ENCODE measurements at regions of chr10 and their contacts with region 1.

Region 1: DNA sequence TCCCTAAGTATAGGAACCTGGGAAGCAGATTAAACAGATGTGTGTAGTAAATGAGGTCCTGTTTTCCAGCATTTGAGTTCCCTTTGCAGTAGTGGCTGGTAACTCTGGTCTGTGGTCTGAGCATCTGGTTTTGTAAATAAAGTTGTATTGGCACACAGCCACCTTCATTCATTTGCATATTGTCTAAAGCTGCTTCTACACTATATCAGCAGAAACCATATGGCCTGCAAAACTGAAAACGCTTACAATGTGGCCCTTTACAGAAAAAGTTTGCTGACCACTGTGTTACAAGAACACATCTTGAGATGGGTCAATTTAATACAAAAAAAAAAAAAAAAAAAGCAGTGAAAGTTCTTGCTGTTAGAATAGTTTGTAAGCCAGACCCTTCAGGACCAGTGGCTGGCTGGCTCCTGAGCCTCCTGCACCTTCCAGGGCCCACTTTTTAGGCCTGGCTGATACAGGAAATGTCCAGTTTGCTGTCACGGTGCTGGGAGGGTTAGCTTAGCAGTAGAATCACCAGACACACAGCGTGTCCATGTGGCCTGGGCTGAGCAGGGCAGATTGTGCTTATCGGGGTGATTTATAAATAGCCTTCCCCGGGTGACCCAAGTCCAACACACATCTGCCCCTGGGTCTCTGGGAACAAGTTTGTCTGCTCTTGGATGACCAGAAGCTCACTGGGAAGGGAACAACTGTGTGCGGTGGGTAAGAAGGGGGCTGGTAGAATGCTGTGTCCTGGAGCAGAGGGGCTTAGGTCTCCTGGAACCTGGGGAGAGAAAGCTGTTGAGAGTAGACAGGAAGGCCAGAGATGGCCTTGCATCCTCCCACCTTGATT is 1.4 kb downstream of the C10orf71 start:
- DNase-seq: peak; percentile 54 to 81
- ATAC-seq: peak; percentile 70 to 86 (median 79)
- H3K4me3 ChIP-seq: peak overlapping the region; percentile 8 to 64 (median 46)
- H3K27ac ChIP-seq: peak overlapping the region; percentile 81 to 98 (median 94)
- H3K4me1 ChIP-seq: peaks cover 0 to 98% (median 48%) of the 10 kb centered on the region in 9 donors
- H3K27me3 ChIP-seq: no peaks in the 10 kb centered on the region
- CTCF ChIP-seq: peak in 5 of 9 donors; percentile 6 to 46 (median 42)

Region 2: GRCh38 chr10:49187950-49188761 is 112.2 kb before region 1 on chr10 and contains the start of gene TMEM273:
- intact Hi-C with region 1: loop called in 3 of 10 experiments (anchors 10 kb)
- DNase-seq: peak; percentile 81 to 88
- ATAC-seq: peak; percentile 97 to 98 (median 98)
- H3K4me3 ChIP-seq: peak within 1 kb of the TSS in 9 of 10 donors; percentile 27 to 58 (median 49)
- H3K27ac ChIP-seq: peak within 1 kb of the TSS; percentile 17 to 88 (median 80)
- H3K4me1 ChIP-seq: peaks cover 7 to 81% (median 64%) of the 10 kb centered on the region in 9 donors
- H3K27me3 ChIP-seq: no peaks in the 10 kb centered on the region
- CTCF ChIP-seq: peak in 3 of 9 donors; percentile 20 to 30 (median 24)
- total RNA-seq, gene TMEM273: 10.9 to 27.3 (median 18.6) TPM

Region 3: DNA sequence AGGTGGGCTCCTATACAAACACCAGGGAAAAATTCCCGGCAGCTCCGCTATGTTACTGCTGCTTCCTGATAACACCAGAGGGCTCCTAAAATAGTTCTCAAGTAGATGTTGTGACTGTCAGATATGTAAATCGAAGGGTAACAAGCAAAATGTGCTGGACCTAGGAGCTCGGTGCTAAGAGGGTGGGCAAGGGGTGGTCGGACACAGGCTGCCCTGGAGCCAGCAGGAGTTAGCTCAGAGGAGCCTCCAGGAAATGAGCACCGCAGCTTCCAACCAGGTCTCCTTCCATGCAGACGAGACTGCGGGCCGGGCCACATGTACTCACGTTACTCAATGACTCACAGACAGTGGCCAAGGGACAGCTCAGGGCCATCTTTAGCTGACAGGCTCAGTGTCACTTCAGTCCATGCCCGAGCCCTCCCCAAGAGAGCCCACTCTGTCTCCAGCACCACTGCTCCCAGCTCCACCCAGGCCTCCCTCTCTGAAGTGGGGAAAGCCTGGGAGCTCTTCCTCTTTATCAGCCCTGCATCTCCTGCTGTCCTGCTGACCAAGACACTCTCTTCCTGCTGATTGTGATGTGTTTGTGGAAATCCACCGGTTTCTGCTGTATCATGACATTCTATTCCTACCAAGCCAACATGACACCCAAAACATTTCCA is 75.0 kb before region 1 on chr10:
- intact Hi-C with region 1: loop called in 3 of 10 experiments (anchors 5 to 10 kb)
- DNase-seq: peak in 1 of 2 donors; percentile 31
- ATAC-seq: peak; percentile 55 to 88 (median 74)
- H3K4me3 ChIP-seq: no peak overlapping the region
- H3K27ac ChIP-seq: peak overlapping the region in 5 of 10 donors; percentile 24 to 53 (median 38)
- H3K4me1 ChIP-seq: peaks cover 0 to 26% (median 10%) of the 10 kb centered on the region in 9 donors
- H3K27me3 ChIP-seq: no peaks in the 10 kb centered on the region
- CTCF ChIP-seq: no peak

Region 4: DNA sequence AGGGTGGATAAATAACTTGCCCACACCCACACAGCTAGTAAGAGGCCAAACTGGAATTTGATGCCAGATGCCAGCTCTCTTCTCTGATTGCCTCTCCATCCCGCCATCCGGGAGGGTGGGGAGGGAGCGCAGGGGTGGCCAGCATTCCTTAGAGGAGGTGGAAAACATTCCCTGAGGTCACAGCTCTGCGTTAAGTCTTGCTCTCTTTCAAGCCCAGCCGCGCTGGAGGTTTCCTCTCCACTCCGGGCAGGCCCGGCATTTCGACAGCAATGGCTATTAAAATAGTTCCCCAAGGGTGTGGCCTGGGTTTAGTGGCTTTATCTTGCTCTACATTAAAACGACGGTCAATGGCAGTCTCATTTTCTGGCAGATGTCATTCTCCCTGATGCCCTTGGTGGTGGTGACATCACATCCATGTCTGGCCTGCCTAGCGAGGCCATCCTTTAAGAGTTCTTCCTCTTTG is 17.4 kb before region 1 on chr10:
- intact Hi-C with region 1: loop called in 2 of 10 experiments (anchors 2 kb)
- DNase-seq: peak in 1 of 2 donors; percentile 36
- ATAC-seq: peak in 7 of 8 donors; percentile 7 to 64 (median 28)
- H3K4me3 ChIP-seq: no peak overlapping the region
- H3K27ac ChIP-seq: peak overlapping the region in 7 of 10 donors; percentile 12 to 65 (median 53)
- H3K4me1 ChIP-seq: peaks cover 0 to 56% (median 28%) of the 10 kb centered on the region in 9 donors
- H3K27me3 ChIP-seq: no peaks in the 10 kb centered on the region
- CTCF ChIP-seq: no peak